ENCODE measurements at regions of chr4 and their contacts with region 1.

Region 1: DNA sequence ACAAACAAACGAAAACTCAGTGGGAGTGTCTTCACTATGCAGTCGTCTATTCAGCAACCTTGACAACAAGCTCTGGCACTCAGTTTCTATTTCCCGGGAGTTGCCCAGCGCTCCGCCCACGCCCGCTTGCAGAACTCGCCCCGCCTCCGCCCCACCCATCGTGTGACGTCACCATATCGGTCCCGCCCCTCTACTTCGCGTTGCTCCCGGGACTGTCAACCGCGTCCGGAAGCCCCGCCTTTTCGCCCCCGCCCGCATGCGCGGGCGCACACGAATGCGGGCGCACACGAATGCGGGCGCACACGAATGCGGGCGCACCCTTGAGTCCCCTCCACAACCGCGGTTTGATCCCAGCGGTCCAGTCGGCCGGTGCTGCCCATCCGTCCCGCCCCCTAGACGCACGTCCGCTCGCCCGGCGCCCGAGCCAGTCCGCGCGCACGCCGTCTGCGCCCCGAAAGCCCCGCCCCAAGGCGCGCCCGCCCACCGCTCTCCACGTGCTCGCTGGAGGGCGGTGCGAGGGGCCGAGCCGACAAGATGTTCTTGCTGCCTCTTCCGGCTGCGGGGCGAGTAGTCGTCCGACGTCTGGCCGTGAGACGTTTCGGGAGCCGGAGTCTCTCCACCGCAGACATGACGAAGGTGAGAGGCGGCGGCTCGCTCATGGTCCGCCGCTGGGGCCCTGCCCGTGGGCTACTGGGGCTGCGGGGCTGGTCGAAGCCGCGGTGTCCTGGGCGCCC is at the start of gene LAP3:
- DNase-seq: peak; percentile 96 to 99
- H3K4me3 ChIP-seq: peak within 1 kb of the TSS; percentile 72 to 99 (median 92)
- H3K27ac ChIP-seq: peak within 1 kb of the TSS; percentile 87 to 97
- H3K4me1 ChIP-seq: no peaks in the 10 kb centered on the region
- H3K27me3 ChIP-seq: no peaks in the 10 kb centered on the region
- CTCF ChIP-seq: no peak
- POLR2A ChIP-seq: peak; percentile 48
- total RNA-seq, gene LAP3: 72.4 to 93.4 (median 81.0) TPM

Region 2: GRCh38 chr4:16897991-16898827 is 678.9 kb before region 1 on chr4 and contains the start of gene LDB2:
- intact Hi-C with region 1: loop called (anchors 10 kb)
- DNase-seq: peak in 1 of 2 donors; percentile 24
- H3K4me3 ChIP-seq: peak within 1 kb of the TSS; percentile 48 to 69 (median 53)
- H3K27ac ChIP-seq: peak within 1 kb of the TSS; percentile 48 to 85
- H3K4me1 ChIP-seq: no peaks in the 10 kb centered on the region
- H3K27me3 ChIP-seq: no peaks in the 10 kb centered on the region
- CTCF ChIP-seq: no peak
- POLR2A ChIP-seq: no peak
- total RNA-seq, gene LDB2: 34.5 to 68.8 (median 36.5) TPM

Region 3: GRCh38 chr4:17623451-17624001 is 46.4 kb after region 1 on chr4:
- intact Hi-C with region 1: loop called (anchors 1 kb)
- DNase-seq: no peak
- H3K4me3 ChIP-seq: no peak overlapping the region
- H3K27ac ChIP-seq: no peak overlapping the region
- H3K4me1 ChIP-seq: no peaks in the 10 kb centered on the region
- H3K27me3 ChIP-seq: no peaks in the 10 kb centered on the region
- CTCF ChIP-seq: no peak
- POLR2A ChIP-seq: no peak

Measured in breast epithelium (tissue), 4 donors.